ENCODE measurements at regions of chr11 and their contacts with region 1.

Region 1: DNA sequence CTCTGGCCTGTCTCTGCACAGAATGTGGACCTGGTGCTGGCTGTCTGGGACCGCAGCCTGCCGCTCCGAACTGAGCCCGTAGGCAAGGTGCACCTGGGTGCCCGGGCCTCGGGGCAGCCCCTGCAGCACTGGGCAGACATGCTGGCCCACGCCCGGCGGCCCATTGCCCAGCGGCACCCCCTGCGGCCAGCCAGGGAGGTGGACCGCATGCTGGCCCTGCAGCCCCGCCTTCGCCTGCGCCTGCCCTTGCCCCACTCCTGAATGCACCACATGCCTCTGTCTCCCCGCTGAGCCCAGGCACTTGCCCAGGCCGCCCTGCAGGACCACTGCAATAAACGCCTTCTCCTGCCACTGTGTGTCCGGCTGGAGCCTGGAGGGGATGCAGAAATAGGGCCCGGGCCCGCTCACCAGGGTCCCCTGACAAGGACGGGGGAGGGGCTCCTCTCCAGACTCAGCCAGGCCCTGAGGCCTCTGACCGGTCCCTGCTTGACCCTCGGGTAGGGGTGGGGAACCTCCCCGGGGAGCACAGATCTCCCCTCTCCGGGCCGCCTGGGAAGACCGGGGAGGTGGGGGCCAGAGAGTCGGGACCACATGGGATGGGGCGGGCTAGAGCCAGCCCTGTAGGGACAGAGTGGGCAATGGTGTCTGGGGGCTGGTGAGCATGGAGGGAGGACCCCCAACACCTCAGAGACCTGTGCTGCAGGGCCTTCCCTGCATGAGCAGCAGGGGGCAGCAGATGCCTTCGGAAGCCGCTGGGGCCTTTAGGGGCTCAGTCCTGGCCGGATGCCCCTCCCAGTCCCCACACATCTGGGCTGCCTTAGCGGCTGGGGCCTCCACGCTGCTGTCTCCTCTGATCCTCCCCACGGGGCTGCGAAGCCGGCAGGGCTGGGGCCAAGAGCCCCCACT is 1.4 kb upstream of the TNNI2 start:
- DNase-seq: peak; percentile 79 to 90 (median 88)
- H3K4me3 ChIP-seq: no peak overlapping the region
- H3K27ac ChIP-seq: no peak overlapping the region
- H3K4me1 ChIP-seq: peaks cover 0 to 54% (median 38%) of the 10 kb centered on the region in 4 experiments
- H3K27me3 ChIP-seq: peaks cover 0 to 2% (median 0%) of the 10 kb centered on the region in 5 experiments

Region 2: DNA sequence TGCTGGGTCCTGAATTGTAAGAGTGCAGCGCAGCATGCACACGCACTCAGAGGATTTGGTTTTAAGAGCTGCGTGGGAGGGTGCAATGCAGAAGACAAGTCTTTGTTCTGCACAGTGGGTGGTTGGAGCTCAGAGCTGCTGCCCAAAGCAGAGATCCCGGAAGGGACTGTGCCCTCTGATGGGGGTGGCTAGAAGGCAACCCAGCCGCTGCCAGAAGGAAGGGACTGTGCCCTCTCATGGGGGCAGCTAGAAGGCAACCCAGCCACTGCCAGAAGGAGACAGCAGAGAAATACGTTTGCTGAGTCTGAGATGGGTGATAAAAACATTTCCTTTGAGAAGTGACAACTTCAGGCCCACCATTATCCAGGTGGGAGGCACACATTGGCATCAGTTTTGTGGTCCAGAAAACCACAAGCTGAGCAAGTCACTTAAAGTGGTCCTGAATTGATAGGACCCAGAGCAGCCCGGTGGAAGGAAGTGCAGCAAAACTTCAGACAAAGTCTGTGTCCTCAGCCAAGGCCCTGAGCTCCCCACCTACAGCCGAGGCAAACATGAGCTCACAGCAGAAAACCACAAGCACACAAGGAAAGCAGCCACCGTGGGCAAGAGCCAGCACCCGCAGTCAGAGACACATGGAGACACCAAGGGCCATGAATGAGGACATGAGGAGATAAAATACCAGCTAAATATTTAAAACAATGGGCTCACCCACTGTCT is 136.2 kb before region 1 on chr11:
- CTCF ChIA-PET with region 1: interaction called, 92 read pairs
- POLR2A ChIA-PET with region 1: interaction called, 3 read pairs
- DNase-seq: peak in 2 of 3 donors; percentile 26 to 35
- H3K4me3 ChIP-seq: no peak overlapping the region
- H3K27ac ChIP-seq: no peak overlapping the region
- H3K4me1 ChIP-seq: peaks cover 0 to 13% (median 3%) of the 10 kb centered on the region in 4 experiments
- H3K27me3 ChIP-seq: no peaks in the 10 kb centered on the region

Measured in common myeloid progenitor, CD34-positive (primary cell).